ENCODE measurements at regions of chrX and their contacts with region 1.

Region 1: DNA sequence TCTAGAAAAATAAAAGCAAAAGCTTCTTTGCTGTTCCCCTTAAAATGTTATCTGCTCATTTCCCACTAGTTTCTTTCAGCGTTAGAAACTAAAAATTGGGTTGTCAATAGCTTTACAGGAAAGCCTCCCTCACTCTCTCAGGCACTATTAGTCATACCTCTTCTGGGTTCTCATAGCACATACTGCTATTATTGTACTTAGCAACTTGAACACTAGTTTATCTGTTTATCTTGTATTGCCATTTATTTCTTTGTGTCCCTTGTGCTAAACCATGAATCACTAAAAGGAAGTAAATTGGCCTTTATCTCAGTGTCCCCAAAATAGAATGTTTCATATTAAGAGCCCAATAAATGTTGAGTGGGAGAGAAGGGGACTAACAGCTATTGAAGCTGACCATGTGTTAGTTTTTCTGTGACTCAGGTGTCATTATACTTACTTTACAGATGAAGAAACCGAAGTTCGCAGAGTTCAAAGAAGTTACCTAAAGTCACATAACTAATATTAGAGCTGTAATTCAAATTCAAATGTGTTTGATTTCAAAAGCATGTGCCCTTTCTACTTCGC is 124.8 kb upstream of the CITED1 start:
- DNase-seq: no peak
- H3K4me3 ChIP-seq: no peak overlapping the region
- H3K27ac ChIP-seq: no peak overlapping the region
- H3K4me1 ChIP-seq: no peaks in the 10 kb centered on the region
- H3K27me3 ChIP-seq: no peaks in the 10 kb centered on the region
- CTCF ChIP-seq: no peak
- EP300 ChIP-seq: no peak
- POLR2A ChIP-seq: no peak

Region 2: GRCh38 chrX:72402614-72403013 is 27.9 kb before region 1 on chrX:
- in situ Hi-C with region 1: no loop called
- intact Hi-C with region 1: loop called (anchors 2 kb)
- DNase-seq: no peak
- H3K4me3 ChIP-seq: no peak overlapping the region
- H3K27ac ChIP-seq: no peak overlapping the region
- H3K4me1 ChIP-seq: no peaks in the 10 kb centered on the region
- H3K27me3 ChIP-seq: no peaks in the 10 kb centered on the region
- CTCF ChIP-seq: no peak
- EP300 ChIP-seq: no peak
- POLR2A ChIP-seq: no peak